Activated CD8-positive, alpha-beta T cell treated with anti-CD3 and anti-CD28 coated beads for 36 hours (primary cell): ENCODE measurements at regions of chr4 and their contacts with region 1.

Region 1: DNA sequence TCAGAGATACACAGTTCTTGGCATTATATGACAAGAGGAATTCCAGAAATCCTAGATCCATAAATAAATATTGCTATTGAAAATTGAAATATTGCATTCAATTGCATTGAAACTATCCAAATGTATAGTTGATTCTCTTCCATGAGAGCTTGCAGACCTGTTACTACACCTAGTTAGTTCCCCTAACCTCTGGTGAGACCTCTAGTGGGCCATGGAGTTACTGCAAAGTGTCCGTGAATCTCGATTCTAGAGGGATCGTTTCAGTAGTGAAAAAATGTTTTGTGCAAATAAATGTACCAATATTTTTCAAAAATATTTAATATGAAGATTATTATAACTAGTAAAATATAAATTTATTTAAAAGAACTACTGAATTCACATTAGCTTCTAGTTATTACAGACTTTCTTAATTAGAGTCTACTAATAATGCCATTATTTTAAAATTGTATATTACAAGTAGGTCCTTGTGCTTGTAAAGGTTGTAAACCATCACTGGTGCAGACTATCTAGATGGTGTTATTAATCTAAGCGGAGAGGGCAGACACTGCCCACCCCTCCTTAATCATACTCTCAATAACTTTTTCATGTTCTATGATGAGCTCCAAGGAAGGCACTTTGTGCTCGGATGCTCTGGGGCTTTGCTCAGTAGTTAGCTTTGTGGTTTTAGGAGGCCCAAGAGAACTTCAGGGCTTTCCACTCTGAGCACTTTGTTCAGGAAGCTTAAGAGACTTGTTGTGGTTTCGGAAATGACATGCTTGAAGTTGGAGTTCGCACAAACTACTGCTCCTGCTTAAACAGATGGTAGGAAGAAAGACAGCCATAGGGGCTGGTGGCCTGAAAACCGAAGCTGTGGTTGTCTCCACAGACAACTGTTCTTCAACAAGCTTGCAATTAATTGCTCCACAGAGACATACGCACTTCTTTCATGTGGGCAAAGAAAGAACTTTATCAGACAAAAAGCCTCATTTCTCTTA is 42.8 kb downstream of the IL21 start:
- DNase-seq: peak; percentile 84
- ATAC-seq: peak; percentile 69
- H3K4me3 Mint-ChIP-seq: peak overlapping the region; percentile 70
- H3K27ac Mint-ChIP-seq: peak overlapping the region; percentile 91
- H3K4me1 Mint-ChIP-seq: peaks cover 33% of the 10 kb centered on the region
- H3K27me3 Mint-ChIP-seq: peaks cover 6% of the 10 kb centered on the region
- CTCF ChIP-seq: peak; percentile 72

Region 2: GRCh38 chr4:121950212-121950679 is 627.8 kb before region 1 on chr4:
- CTCF ChIA-PET with region 1: interaction called, 7 read pairs
- POLR2A ChIA-PET with region 1: no interaction called
- intact Hi-C with region 1: loop called (anchors 5 kb)
- DNase-seq: peak; percentile 91
- ATAC-seq: peak; percentile 89
- H3K4me3 Mint-ChIP-seq: peak overlapping the region; percentile 86
- H3K27ac Mint-ChIP-seq: no peak overlapping the region
- H3K4me1 Mint-ChIP-seq: peaks cover 9% of the 10 kb centered on the region
- H3K27me3 Mint-ChIP-seq: peaks cover 43% of the 10 kb centered on the region
- CTCF ChIP-seq: peak; percentile 81

Region 3: GRCh38 chr4:122346036-122346435 is 232.1 kb before region 1 on chr4:
- CTCF ChIA-PET with region 1: interaction called, 10 read pairs
- POLR2A ChIA-PET with region 1: no interaction called
- intact Hi-C with region 1: no loop called
- DNase-seq: no peak
- ATAC-seq: no peak
- H3K4me3 Mint-ChIP-seq: no peak overlapping the region
- H3K27ac Mint-ChIP-seq: no peak overlapping the region
- H3K4me1 Mint-ChIP-seq: no peaks in the 10 kb centered on the region
- H3K27me3 Mint-ChIP-seq: no peaks in the 10 kb centered on the region
- CTCF ChIP-seq: no peak

Region 4: GRCh38 chr4:122500852-122501501 is 77.1 kb before region 1 on chr4:
- CTCF ChIA-PET with region 1: interaction called, 3 read pairs
- POLR2A ChIA-PET with region 1: no interaction called
- intact Hi-C with region 1: loop called (anchors 5 kb)
- DNase-seq: no peak
- ATAC-seq: no peak
- H3K4me3 Mint-ChIP-seq: no peak overlapping the region
- H3K27ac Mint-ChIP-seq: no peak overlapping the region
- H3K4me1 Mint-ChIP-seq: peaks cover 8% of the 10 kb centered on the region
- H3K27me3 Mint-ChIP-seq: peaks cover 3% of the 10 kb centered on the region
- CTCF ChIP-seq: no peak

Region 5: GRCh38 chr4:122562449-122562848 is 15.6 kb before region 1 on chr4:
- CTCF ChIA-PET with region 1: interaction called, 15 read pairs
- POLR2A ChIA-PET with region 1: no interaction called
- intact Hi-C with region 1: no loop called
- DNase-seq: no peak
- ATAC-seq: no peak
- H3K4me3 Mint-ChIP-seq: no peak overlapping the region
- H3K27ac Mint-ChIP-seq: no peak overlapping the region
- H3K4me1 Mint-ChIP-seq: peaks cover 6% of the 10 kb centered on the region
- H3K27me3 Mint-ChIP-seq: peaks cover 5% of the 10 kb centered on the region
- CTCF ChIP-seq: no peak

Region 6: DNA sequence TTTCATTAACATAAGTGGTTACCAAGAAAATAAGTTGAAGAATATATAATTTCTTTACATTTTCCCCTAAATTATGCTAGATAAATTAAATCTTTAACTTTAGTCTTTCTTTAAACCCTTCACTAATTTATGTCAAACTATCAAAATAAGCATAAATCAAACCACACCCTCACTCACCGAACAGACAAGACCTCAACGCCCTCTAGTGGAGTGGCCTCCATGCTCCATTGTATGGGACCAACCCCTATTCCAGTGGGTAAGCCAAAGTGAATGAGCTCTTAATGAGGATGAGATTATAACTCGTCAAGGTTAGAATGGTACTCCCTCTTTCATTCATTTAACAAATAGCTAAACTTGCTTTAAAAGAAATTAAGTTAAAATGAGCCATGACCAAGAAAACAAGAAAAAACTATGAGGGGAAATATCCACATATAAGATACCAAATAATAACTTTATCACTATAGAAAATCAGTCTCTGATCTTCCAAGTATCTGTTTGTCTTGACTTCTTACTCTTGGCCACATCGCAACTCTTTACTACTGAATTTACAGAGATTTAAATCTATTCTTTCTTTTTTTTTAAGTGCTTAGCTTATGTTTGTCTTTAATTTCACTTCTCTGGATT is 138.8 kb after region 1 on chr4:
- CTCF ChIA-PET with region 1: interaction called, 18 read pairs
- POLR2A ChIA-PET with region 1: no interaction called
- intact Hi-C with region 1: no loop called
- DNase-seq: peak; percentile 88
- ATAC-seq: peak; percentile 86
- H3K4me3 Mint-ChIP-seq: no peak overlapping the region
- H3K27ac Mint-ChIP-seq: no peak overlapping the region
- H3K4me1 Mint-ChIP-seq: peaks cover 14% of the 10 kb centered on the region
- H3K27me3 Mint-ChIP-seq: peaks cover 4% of the 10 kb centered on the region
- CTCF ChIP-seq: peak; percentile 72

Region 7: GRCh38 chr4:122747883-122748282 is 169.8 kb after region 1 on chr4:
- CTCF ChIA-PET with region 1: no interaction called
- POLR2A ChIA-PET with region 1: no interaction called
- intact Hi-C with region 1: no loop called
- DNase-seq: no peak
- ATAC-seq: no peak
- H3K4me3 Mint-ChIP-seq: no peak overlapping the region
- H3K27ac Mint-ChIP-seq: no peak overlapping the region
- H3K4me1 Mint-ChIP-seq: peaks cover 7% of the 10 kb centered on the region
- H3K27me3 Mint-ChIP-seq: peaks cover 17% of the 10 kb centered on the region
- CTCF ChIP-seq: no peak

Region 8: GRCh38 chr4:123017636-123018395 is 439.7 kb after region 1 on chr4:
- CTCF ChIA-PET with region 1: no interaction called
- POLR2A ChIA-PET with region 1: no interaction called
- intact Hi-C with region 1: no loop called
- DNase-seq: no peak
- ATAC-seq: no peak
- H3K4me3 Mint-ChIP-seq: no peak overlapping the region
- H3K27ac Mint-ChIP-seq: no peak overlapping the region
- H3K4me1 Mint-ChIP-seq: no peaks in the 10 kb centered on the region
- H3K27me3 Mint-ChIP-seq: no peaks in the 10 kb centered on the region
- CTCF ChIP-seq: no peak

Region 9: GRCh38 chr4:123046096-123046495 is 468.0 kb after region 1 on chr4:
- CTCF ChIA-PET with region 1: no interaction called
- POLR2A ChIA-PET with region 1: no interaction called
- intact Hi-C with region 1: no loop called
- DNase-seq: no peak
- ATAC-seq: no peak
- H3K4me3 Mint-ChIP-seq: no peak overlapping the region
- H3K27ac Mint-ChIP-seq: no peak overlapping the region
- H3K4me1 Mint-ChIP-seq: peaks cover 4% of the 10 kb centered on the region
- H3K27me3 Mint-ChIP-seq: no peaks in the 10 kb centered on the region
- CTCF ChIP-seq: no peak